ENCODE measurements at regions of chr6 and their contacts with region 1.

Region 1: DNA sequence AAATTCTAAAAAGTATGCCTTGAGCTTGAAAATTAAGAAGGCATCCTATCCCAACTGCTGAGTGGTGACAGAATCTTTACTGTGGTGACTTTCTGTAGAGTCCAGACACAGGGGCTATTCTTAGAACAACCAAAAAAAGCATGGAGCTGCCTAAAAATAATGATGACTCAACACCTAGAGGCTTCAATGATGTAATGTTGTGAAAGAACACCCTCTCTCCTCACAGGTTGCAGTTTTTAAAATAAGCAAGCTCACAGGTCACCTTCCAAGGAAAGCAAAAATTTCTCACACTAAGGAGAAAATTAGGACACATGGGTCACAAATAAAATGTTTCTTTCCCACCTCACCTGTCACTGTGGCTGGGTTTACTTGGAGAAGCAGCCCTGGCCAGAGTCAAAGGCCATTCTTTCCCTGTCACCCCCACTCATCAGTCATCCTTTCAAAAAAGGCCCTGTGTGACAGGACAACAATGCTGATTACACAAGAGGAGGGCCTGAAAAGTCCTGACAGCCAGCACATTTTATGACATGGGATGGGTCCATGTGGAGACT is 53.5 kb downstream of the RCAN2 start:
- DNase-seq: peak in 1 of 2 donors; percentile 23
- ATAC-seq: peak; percentile 85 to 94 (median 90)
- H3K4me3 ChIP-seq: no peak overlapping the region
- H3K27ac ChIP-seq: peak overlapping the region; percentile 47 to 89 (median 82)
- H3K4me1 ChIP-seq: peaks cover 0 to 71% (median 41%) of the 10 kb centered on the region in 9 donors
- H3K27me3 ChIP-seq: no peaks in the 10 kb centered on the region
- CTCF ChIP-seq: no peak

Region 2: DNA sequence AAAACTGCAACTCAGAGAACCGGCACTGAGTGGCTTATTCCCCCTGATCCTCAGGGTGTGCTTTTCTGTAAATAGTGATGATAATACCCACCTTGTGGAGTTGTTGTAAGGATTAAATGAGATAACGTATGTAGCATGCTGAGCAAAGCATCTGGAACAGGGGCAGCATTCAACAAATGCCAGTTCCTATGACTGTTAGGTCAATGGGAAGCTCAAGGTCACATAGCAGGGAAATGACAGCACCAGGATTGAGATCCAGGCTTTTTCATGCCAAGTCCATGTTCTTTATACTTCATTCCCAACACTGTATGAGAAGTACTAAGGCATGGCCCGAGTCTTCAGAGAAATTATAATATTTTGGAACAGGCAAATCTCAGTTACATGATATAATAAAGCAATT is 48.4 kb after region 1 on chr6:
- intact Hi-C with region 1: loop called in 2 of 10 experiments (anchors 5 kb)
- DNase-seq: no peak
- ATAC-seq: peak in 3 of 8 donors; percentile 42 to 48 (median 43)
- H3K4me3 ChIP-seq: peak overlapping the region in 2 of 10 donors; percentile 1 to 10
- H3K27ac ChIP-seq: peak overlapping the region in 9 of 10 donors; percentile 24 to 97 (median 87)
- H3K4me1 ChIP-seq: peaks cover 0 to 85% (median 29%) of the 10 kb centered on the region in 9 donors
- H3K27me3 ChIP-seq: peaks cover 0 to 37% (median 0%) of the 10 kb centered on the region in 7 donors
- CTCF ChIP-seq: no peak